T-cell (primary cell): ENCODE measurements at regions of chr12 and their contacts with region 1.

Region 1: DNA sequence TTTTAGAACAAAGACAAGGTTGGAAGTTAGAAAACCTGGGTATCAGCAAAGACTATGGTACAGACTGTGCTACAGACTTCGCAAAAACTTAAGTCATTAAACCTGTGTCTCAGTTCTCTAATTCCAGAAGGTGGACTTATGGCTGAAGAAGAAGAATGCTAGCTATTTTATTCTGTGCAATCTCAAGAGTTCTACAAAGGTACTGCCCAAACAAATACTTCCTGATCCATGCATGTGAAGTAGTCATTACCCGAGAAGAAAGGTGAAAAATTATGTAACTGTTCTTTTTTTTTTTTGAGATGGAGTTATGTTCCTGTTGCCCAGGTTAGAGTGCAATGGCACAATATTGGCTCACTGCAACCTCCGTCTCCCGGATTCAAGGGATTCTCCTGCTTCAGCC is 45.5 kb upstream of the SLC2A3 start:
- DNase-seq: no peak
- ATAC-seq: no peak
- H3K4me3 ChIP-seq: no peak overlapping the region
- H3K4me3 Mint-ChIP-seq: no peak overlapping the region
- H3K27ac ChIP-seq: no peak overlapping the region
- H3K27ac Mint-ChIP-seq: no peak overlapping the region
- H3K4me1 ChIP-seq: no peaks in the 10 kb centered on the region
- H3K4me1 Mint-ChIP-seq: peaks cover 0 to 10% (median 0%) of the 10 kb centered on the region in 3 donors
- H3K27me3 ChIP-seq: peaks cover 0 to 2% of the 10 kb centered on the region in 2 experiments
- H3K27me3 Mint-ChIP-seq: no peaks in the 10 kb centered on the region

Region 2: GRCh38 chr12:6205144-6205539 is 1776.3 kb before region 1 on chr12:
- CTCF ChIA-PET with region 1: no interaction called
- POLR2A ChIA-PET with region 1: interaction called in 1 of 2 experiments, 10 read pairs
- DNase-seq: no peak
- ATAC-seq: no peak
- H3K4me3 ChIP-seq: no peak overlapping the region
- H3K4me3 Mint-ChIP-seq: no peak overlapping the region
- H3K27ac ChIP-seq: no peak overlapping the region
- H3K27ac Mint-ChIP-seq: no peak overlapping the region
- H3K4me1 ChIP-seq: peaks cover 3 to 17% of the 10 kb centered on the region in 2 experiments
- H3K4me1 Mint-ChIP-seq: peaks cover 10 to 16% (median 14%) of the 10 kb centered on the region in 3 donors
- H3K27me3 ChIP-seq: peaks cover 2 to 48% of the 10 kb centered on the region in 2 experiments
- H3K27me3 Mint-ChIP-seq: peaks cover 21 to 50% of the 10 kb centered on the region in 2 donors

Region 3: DNA sequence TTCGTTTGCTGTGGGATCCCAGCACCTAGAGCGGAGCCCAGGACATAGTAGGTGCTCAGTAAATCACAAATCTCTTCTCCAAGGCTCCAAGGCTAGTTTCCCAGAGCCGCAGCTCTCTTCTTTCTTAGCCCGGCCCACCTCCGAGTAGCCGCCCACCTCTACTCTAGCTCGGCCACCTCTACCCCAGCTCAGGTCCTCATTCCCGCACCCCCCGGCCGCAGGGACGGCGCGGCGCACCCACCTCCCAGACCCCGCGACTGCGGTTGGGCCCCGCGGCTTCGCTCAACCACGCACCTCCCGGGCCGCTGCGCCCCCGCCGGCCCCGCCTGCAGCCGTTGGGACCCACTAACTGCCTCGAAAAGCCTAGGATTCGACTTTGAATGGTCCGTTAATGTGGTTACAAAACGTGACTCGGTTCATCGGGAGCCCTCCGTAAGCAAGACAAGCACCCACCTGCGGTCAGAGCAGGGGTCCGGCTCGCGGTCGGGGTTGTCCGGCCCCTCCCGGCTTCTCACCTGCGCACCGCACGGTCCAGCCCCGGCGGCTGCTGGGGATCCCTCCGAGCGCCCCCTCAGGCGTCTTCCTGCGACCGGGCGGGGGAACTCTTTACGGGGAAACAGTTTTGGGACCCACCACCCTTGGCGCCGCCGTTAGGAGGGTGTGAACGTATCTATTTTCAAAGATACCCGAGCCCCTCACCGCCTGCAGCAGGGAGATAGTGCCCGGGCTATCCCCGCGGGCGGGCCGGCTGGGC is 108.7 kb before region 1 on chr12 and contains the start of gene SLC2A14:
- CTCF ChIA-PET with region 1: no interaction called
- POLR2A ChIA-PET with region 1: no interaction called
- DNase-seq: no peak
- ATAC-seq: no peak
- H3K4me3 ChIP-seq: peak within 1 kb of the TSS in 1 of 2 donors; percentile 36
- H3K4me3 Mint-ChIP-seq: peak within 1 kb of the TSS in 1 of 3 donors; percentile 46
- H3K27ac ChIP-seq: no peak within 1 kb of the TSS
- H3K27ac Mint-ChIP-seq: no peak within 1 kb of the TSS
- H3K4me1 ChIP-seq: peaks cover 0 to 8% of the 10 kb centered on the region in 2 experiments
- H3K4me1 Mint-ChIP-seq: peaks cover 0 to 7% (median 6%) of the 10 kb centered on the region in 3 donors
- H3K27me3 ChIP-seq: peaks cover 4 to 23% of the 10 kb centered on the region in 2 experiments
- H3K27me3 Mint-ChIP-seq: peaks cover 19 to 30% of the 10 kb centered on the region in 2 donors
- total RNA-seq, gene SLC2A14: 0.10 to 2.5 (median 0.21) TPM

Region 4: DNA sequence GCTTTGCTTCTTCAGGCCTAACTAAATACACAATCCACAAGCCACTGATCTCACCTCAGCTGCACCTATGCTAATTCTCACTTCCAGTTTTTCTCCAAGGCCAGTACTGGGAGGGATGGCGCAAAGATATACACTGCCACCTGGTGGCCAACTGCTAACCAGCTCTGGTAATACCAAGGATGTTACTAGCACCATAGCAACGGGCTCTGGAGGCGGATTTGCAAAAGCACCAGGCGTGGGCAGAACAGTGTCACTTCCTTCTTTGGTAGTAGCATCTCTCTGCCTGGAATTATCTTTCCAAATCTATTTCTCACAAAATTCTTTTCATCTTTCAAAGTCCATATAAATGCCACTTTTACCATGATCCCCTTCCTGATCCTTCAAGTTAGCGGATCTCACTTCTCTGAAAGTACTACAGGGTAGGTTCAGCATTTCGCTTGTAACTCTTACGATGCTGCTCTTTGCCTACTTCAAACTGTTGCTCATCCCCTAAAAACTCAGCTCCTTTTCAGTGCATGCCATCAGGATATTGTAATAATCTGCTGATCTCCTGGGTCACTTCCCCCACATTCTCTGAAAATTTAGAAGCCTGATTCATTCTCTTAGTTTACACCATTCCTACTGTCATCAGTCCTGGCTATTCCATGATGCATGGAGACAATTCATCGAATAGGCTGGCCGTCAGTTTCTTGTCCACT is 14.0 kb after region 1 on chr12:
- CTCF ChIA-PET with region 1: no interaction called
- POLR2A ChIA-PET with region 1: interaction called in 1 of 2 experiments, 12 read pairs
- DNase-seq: peak; percentile 47 to 87 (median 79)
- ATAC-seq: peak; percentile 99 to 100 (median 99)
- H3K4me3 ChIP-seq: no peak overlapping the region
- H3K4me3 Mint-ChIP-seq: no peak overlapping the region
- H3K27ac ChIP-seq: peak overlapping the region; percentile 36
- H3K27ac Mint-ChIP-seq: no peak overlapping the region
- H3K4me1 ChIP-seq: peaks cover 3 to 17% of the 10 kb centered on the region in 2 experiments
- H3K4me1 Mint-ChIP-seq: peaks cover 13 to 19% (median 14%) of the 10 kb centered on the region in 3 donors
- H3K27me3 ChIP-seq: peaks cover 0 to 2% of the 10 kb centered on the region in 2 experiments
- H3K27me3 Mint-ChIP-seq: no peaks in the 10 kb centered on the region